Prostate gland (tissue), 2 donors: ENCODE measurements at regions of chr5 and their contacts with region 1.

Region 1: GRCh38 chr5:115586601-115587048 is 15.7 kb downstream of the TICAM2 start:
- DNase-seq: no peak
- H3K4me3 ChIP-seq: no peak overlapping the region
- H3K27ac ChIP-seq: no peak overlapping the region
- H3K4me1 ChIP-seq: no peaks in the 10 kb centered on the region
- H3K27me3 ChIP-seq: no peaks in the 10 kb centered on the region
- CTCF ChIP-seq: peak; percentile 45 to 68 (median 58)
- POLR2A ChIP-seq: no peak

Region 2: GRCh38 chr5:115309751-115310370 is 276.8 kb before region 1 on chr5:
- intact Hi-C with region 1: loop called (anchors 5 kb)
- DNase-seq: no peak
- H3K4me3 ChIP-seq: no peak overlapping the region
- H3K27ac ChIP-seq: no peak overlapping the region
- H3K4me1 ChIP-seq: no peaks in the 10 kb centered on the region
- H3K27me3 ChIP-seq: no peaks in the 10 kb centered on the region
- CTCF ChIP-seq: peak in 3 of 4 experiments; percentile 65 to 79 (median 79)
- POLR2A ChIP-seq: no peak

Region 3: GRCh38 chr5:115377468-115378217 is 209.0 kb before region 1 on chr5:
- intact Hi-C with region 1: loop called (anchors 5 kb)
- DNase-seq: no peak
- H3K4me3 ChIP-seq: no peak overlapping the region
- H3K27ac ChIP-seq: no peak overlapping the region
- H3K4me1 ChIP-seq: no peaks in the 10 kb centered on the region
- H3K27me3 ChIP-seq: no peaks in the 10 kb centered on the region
- CTCF ChIP-seq: peak in 2 of 4 experiments; percentile 16 to 23
- POLR2A ChIP-seq: no peak

Region 4: DNA sequence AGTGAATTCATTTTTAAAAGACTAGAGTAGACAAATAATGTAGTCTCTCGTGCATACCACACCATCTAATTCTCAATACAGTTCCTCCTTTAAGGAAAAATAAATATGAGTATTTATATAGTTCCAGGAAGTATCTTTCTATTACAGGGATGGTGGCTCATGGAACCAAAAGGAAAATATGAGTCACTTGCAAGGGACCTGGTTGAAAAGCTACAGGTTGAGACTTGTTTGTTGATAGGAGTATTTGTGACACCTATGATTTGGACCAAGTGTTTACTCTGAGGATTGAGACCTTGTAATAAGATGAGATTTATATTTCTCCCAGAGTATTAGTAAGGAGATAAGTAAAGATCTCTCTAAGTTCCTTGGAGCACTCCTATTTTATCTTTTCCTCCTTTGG is 162.4 kb after region 1 on chr5:
- intact Hi-C with region 1: no loop called
- DNase-seq: no peak
- H3K4me3 ChIP-seq: no peak overlapping the region
- H3K27ac ChIP-seq: no peak overlapping the region
- H3K4me1 ChIP-seq: no peaks in the 10 kb centered on the region
- H3K27me3 ChIP-seq: no peaks in the 10 kb centered on the region
- CTCF ChIP-seq: no peak
- POLR2A ChIP-seq: no peak

Region 5: DNA sequence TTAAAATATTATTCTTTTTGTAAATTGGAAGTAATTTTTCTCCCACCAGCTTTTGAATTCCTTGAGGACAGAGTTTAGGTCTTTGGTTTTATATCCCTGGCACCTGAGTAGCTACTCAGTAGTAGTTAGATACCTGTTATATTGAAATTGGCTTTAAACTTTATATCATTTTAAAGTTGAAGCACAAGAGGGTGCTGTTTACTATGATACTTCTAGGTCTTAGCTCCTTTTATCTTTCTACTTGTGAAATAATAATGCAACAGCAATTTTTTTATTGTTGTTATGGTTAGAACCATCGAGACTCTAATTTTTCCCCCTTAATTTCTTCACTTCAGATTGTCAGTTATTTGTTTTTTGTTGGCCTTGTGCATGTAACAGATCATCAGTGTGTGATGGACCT is 301.4 kb after region 1 on chr5:
- intact Hi-C with region 1: no loop called
- DNase-seq: no peak
- H3K4me3 ChIP-seq: no peak overlapping the region
- H3K27ac ChIP-seq: no peak overlapping the region
- H3K4me1 ChIP-seq: no peaks in the 10 kb centered on the region
- H3K27me3 ChIP-seq: no peaks in the 10 kb centered on the region
- CTCF ChIP-seq: peak in 2 of 4 experiments; percentile 7 to 31
- POLR2A ChIP-seq: no peak